AG04450 (cell line): ENCODE measurements at regions of chr3 and their contacts with region 1.

Region 1: DNA sequence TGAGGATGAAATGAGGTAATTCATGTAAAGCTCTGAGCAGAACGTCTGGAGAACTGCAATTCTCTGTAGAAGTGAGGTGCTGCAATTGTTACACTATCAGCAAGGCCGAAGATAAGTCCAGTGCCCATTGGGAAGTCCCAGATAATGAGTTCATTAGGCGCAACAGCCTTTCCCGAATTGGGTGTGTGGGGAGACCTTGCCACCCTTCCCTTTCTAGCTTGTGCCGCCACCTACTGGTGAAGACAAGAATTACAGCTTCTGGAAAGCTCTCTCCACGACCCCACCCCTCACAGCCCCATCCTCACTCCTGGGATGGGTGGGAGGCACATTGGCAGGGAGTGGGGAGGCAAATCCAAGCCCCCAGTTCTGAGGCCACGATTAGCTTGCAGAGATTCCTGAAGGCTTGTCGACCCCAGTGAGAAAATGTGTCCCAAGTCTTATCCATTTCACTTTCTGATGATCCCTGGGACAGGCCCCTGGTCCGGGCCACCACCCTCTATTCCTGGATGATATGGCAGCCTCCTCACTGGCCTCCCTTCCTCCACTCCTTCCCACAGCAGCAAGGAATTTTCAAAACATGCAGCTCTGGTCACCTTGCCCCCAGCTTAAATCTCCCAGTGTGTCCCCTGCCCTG is 36.4 kb downstream of the FAM3D start:
- DNase-seq: no peak
- H3K4me3 ChIP-seq: no peak overlapping the region
- H3K27ac ChIP-seq: no peak overlapping the region
- H3K27me3 ChIP-seq: no peaks in the 10 kb centered on the region
- CTCF ChIP-seq: peak; percentile 83

Region 2: GRCh38 chr3:58560771-58561311 is 69.4 kb before region 1 on chr3:
- CTCF ChIA-PET with region 1: interaction called, 322 read pairs
- POLR2A ChIA-PET with region 1: interaction called, 4 read pairs
- DNase-seq: peak; percentile 95
- H3K4me3 ChIP-seq: no peak overlapping the region
- H3K27ac ChIP-seq: peak overlapping the region; percentile 89
- H3K27me3 ChIP-seq: no peaks in the 10 kb centered on the region
- CTCF ChIP-seq: peak; percentile 73

Region 3: GRCh38 chr3:58577269-58577821 is 52.8 kb before region 1 on chr3 and contains the start of gene FAM107A:
- CTCF ChIA-PET with region 1: interaction called, 322 read pairs
- POLR2A ChIA-PET with region 1: no interaction called
- DNase-seq: no peak
- H3K4me3 ChIP-seq: no peak within 1 kb of the TSS
- H3K27ac ChIP-seq: no peak within 1 kb of the TSS
- H3K27me3 ChIP-seq: peaks cover 17% of the 10 kb centered on the region
- CTCF ChIP-seq: peak; percentile 32
- polyA plus RNA-seq, gene FAM107A: 0.02 TPM in 1 of 2 replicates, not detected in the other

Region 4: GRCh38 chr3:58585005-58585786 is 45.0 kb before region 1 on chr3:
- CTCF ChIA-PET with region 1: interaction called, 14 read pairs
- POLR2A ChIA-PET with region 1: no interaction called
- DNase-seq: no peak
- H3K4me3 ChIP-seq: peak overlapping the region; percentile 67
- H3K27ac ChIP-seq: no peak overlapping the region
- H3K27me3 ChIP-seq: peaks cover 32% of the 10 kb centered on the region
- CTCF ChIP-seq: peak; percentile 77

Region 5: GRCh38 chr3:58617338-58617761 is 12.8 kb before region 1 on chr3:
- CTCF ChIA-PET with region 1: interaction called, 40 read pairs
- POLR2A ChIA-PET with region 1: no interaction called
- DNase-seq: peak; percentile 1
- H3K4me3 ChIP-seq: no peak overlapping the region
- H3K27ac ChIP-seq: peak overlapping the region; percentile 31
- H3K27me3 ChIP-seq: peaks cover 2% of the 10 kb centered on the region
- CTCF ChIP-seq: no peak

Region 6: DNA sequence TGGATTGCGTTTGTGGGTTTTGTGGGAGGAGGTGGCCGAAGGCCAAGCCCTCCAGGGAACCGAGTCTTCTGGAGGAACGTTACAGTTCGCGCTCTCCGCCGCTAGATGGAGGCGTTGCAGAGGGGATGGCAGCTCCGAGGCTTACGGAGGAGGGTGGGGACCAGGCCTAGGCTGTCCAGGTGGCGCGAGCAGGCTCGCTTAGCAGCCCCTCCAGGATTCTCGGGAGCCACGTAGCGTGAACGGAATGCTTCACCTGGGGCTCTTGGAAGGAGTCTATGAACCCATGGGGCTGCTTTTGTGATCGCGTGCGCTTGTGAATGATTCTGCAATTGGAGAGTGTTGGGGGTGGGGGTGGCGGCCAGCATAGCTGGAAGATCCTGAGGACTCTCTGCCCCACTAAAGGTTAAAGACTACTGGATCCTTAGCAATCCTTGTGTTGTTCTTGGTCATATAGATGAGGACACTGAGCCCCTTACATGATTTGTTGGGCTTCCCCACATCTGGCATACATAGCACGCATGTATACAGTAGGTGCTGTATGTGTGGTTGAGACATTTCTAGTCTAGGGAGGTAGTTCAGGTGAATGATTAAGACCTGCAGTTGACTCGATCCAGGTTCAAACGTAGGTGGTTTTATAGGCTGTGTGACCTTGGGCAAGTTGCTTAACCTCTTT is 10.6 kb after region 1 on chr3:
- CTCF ChIA-PET with region 1: interaction called, 59 read pairs
- POLR2A ChIA-PET with region 1: no interaction called
- DNase-seq: peak; percentile 50
- H3K4me3 ChIP-seq: no peak overlapping the region
- H3K27ac ChIP-seq: no peak overlapping the region
- H3K27me3 ChIP-seq: no peaks in the 10 kb centered on the region
- CTCF ChIP-seq: peak; percentile 95